ENCODE measurements at regions of chr1 and their contacts with region 1.

Region 1: DNA sequence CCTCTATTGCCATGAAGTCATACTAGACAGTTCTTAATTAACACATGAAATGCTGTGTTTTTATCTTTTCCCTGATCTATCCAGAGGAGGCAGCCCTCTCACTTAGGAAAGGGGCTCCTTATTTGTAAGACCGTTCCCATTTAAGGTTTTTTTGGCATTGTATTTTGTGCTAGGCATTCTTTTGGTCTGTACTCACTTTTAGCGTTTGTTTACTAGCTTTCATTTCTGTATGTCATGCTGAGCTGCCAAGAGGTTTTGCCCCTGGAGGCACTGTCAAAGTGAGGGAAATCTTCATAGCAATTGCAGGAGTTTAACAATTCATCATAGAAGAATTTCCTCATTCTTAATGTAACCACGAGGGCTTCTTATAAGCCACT is 59.5 kb downstream of the MTR start:
- DNase-seq: no peak
- ATAC-seq: no peak
- H3K4me3 ChIP-seq: no peak overlapping the region
- H3K27ac ChIP-seq: peak overlapping the region in 1 of 4 donors; percentile 0
- H3K4me1 ChIP-seq: no peaks in the 10 kb centered on the region
- H3K27me3 ChIP-seq: no peaks in the 10 kb centered on the region
- CTCF ChIP-seq: no peak
- POLR2A ChIP-seq: no peak

Region 2: GRCh38 chr1:236338096-236338495 is 516.5 kb before region 1 on chr1:
- intact Hi-C with region 1: no loop called
- DNase-seq: no peak
- ATAC-seq: no peak
- H3K4me3 ChIP-seq: no peak overlapping the region
- H3K27ac ChIP-seq: no peak overlapping the region
- H3K4me1 ChIP-seq: peaks cover 53% of the 10 kb centered on the region
- H3K27me3 ChIP-seq: no peaks in the 10 kb centered on the region
- CTCF ChIP-seq: no peak
- POLR2A ChIP-seq: no peak

Region 3: DNA sequence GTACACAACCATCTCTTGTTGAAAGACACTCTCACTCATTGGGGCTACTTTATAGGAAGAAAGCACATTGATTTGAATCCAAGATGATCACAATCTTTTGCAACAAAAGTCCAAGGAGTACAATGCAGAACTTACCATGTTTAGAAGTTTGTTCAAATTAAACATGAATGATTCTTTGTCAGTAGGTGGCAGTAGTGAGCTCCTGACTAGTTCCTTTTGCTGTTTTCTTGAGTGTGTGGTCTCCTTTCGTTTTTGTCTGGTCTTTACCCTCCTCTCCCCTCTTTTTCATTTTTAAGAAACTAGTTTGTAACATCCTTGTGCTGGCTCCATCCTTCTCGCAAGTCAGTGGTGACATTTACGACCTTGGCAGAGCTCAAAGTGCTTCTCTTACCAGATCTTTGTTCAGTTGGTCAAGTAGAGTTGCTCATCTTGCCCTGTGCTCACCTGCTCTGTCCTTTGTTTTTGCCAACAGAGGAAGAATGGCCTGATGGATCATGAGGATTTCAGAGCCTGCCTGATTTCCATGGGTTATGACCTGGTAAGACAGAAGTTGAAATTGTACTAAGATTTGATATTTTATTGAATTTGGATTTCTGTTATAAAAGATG is 95.2 kb before region 1 on chr1:
- intact Hi-C with region 1: loop called (anchors 10 kb)
- DNase-seq: no peak
- ATAC-seq: no peak
- H3K4me3 ChIP-seq: no peak overlapping the region
- H3K27ac ChIP-seq: no peak overlapping the region
- H3K4me1 ChIP-seq: peaks cover 47% of the 10 kb centered on the region
- H3K27me3 ChIP-seq: no peaks in the 10 kb centered on the region
- CTCF ChIP-seq: peak; percentile 62 to 75 (median 70)
- POLR2A ChIP-seq: no peak